ENCODE measurements at regions of chr7 and their contacts with region 1.

Region 1: DNA sequence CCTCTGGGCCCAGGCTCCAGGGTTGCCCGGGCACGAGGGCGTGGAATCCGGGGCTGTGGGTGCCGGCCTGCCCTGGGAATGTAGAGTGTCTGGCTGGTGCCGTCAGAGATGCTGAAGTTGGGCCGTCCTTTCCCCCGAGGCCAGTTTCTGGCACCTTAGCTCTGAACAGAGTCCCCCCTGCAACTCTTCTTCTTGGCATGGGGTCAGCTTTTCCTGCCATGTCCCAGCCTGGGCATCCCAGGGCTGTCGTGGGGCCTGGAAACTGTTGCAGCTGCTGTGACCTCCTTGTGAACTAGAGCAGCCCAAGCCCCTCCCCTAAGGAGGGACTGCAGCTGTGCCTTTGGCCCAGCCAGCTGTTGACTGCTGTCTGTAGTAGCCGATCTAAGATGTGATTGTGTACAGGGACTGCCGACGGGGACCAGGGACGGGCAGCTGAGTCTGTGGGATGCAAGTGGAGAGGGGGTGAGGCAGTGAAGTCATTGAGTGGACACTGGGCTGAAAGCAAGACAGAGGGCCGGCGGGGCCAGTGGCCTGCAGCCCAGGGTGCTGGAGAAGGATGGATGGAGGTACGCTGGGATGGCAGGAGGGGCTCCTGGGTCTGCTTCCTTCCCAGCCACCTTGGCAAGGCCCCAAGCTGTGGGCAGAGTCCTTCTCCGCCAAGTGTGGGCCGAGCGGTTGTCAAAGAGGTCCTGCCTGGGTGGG is 35.8 kb downstream of the GBX1 start:
- DNase-seq: peak; percentile 87
- H3K4me3 ChIP-seq: no peak overlapping the region
- H3K27ac ChIP-seq: peak overlapping the region in 1 of 2 experiments; percentile 73; a peak in 2 of 4 replicates
- H3K4me1 ChIP-seq: peaks cover 0 to 34% of the 10 kb centered on the region in 2 experiments; a peak in 1 of 4 replicates
- H3K27me3 ChIP-seq: no peaks in the 10 kb centered on the region
- CTCF ChIP-seq: no peak
- EP300 ChIP-seq: no peak
- RAD21 ChIP-seq: no peak

Region 2: GRCh38 chr7:151143261-151144015 is 11.7 kb after region 1 on chr7:
- CTCF ChIA-PET with region 1: interaction called, 12 read pairs
- POLR2A ChIA-PET with region 1: interaction called, 3 read pairs
- DNase-seq: no peak
- H3K4me3 ChIP-seq: no peak overlapping the region
- H3K27ac ChIP-seq: no peak overlapping the region
- H3K4me1 ChIP-seq: peaks cover 0 to 12% of the 10 kb centered on the region in 2 experiments; a peak in 1 of 4 replicates
- H3K27me3 ChIP-seq: no peaks in the 10 kb centered on the region
- CTCF ChIP-seq: no peak
- EP300 ChIP-seq: no peak
- RAD21 ChIP-seq: no peak

Region 3: GRCh38 chr7:151459726-151460473 is 328.2 kb after region 1 on chr7:
- CTCF ChIA-PET with region 1: no interaction called
- POLR2A ChIA-PET with region 1: no interaction called
- DNase-seq: peak; percentile 77
- H3K4me3 ChIP-seq: peak overlapping the region; percentile 23 to 42; a peak in 3 of 4 replicates
- H3K27ac ChIP-seq: peak overlapping the region; percentile 44 to 54; a peak in 3 of 4 replicates
- H3K4me1 ChIP-seq: peaks cover 0 to 14% of the 10 kb centered on the region in 2 experiments; a peak in 1 of 4 replicates
- H3K27me3 ChIP-seq: no peaks in the 10 kb centered on the region
- CTCF ChIP-seq: peak; percentile 44
- EP300 ChIP-seq: peak in 1 of 2 experiments; percentile 31; a peak in 1 of 4 replicates
- RAD21 ChIP-seq: peak; percentile 53

Measured in SK-N-SH (cell line).